ENCODE measurements at regions of chr22 and their contacts with region 1.

Region 1: DNA sequence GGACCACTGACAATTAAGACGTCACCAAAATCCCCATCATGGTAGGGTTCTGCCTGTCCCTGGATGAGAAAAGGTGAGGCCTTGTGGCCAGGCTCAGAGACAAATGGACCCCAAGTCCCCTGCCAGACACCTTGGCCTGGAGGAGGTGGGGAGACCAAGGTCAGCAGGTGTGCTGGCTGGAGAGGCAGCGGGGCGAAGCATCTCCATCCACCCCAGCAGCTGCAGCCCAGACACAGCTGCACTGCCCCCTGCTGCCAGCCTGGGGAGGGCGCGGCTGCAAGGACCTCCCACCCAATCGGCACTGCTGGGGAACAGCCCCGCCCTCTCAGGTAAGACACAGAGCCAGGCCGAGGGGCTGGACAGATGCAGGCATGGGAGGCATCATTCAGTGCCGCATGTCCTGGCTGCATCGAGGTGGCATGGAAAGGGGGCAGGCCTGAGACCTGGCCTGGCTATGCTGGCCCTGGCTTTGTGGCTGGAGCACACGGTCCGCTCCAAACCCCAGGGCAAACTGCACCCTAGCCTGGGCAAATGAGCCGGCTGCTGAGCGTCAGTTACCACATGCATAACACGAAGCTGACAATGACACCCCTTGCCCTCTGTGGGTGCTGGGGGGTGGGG is 12.2 kb upstream of the MFNG start:
- DNase-seq: peak; percentile 84
- ATAC-seq: peak; percentile 98
- H3K4me3 Mint-ChIP-seq: no peak overlapping the region
- H3K27ac Mint-ChIP-seq: no peak overlapping the region
- H3K4me1 Mint-ChIP-seq: peaks cover 15% of the 10 kb centered on the region
- H3K27me3 Mint-ChIP-seq: no peaks in the 10 kb centered on the region

Region 2: DNA sequence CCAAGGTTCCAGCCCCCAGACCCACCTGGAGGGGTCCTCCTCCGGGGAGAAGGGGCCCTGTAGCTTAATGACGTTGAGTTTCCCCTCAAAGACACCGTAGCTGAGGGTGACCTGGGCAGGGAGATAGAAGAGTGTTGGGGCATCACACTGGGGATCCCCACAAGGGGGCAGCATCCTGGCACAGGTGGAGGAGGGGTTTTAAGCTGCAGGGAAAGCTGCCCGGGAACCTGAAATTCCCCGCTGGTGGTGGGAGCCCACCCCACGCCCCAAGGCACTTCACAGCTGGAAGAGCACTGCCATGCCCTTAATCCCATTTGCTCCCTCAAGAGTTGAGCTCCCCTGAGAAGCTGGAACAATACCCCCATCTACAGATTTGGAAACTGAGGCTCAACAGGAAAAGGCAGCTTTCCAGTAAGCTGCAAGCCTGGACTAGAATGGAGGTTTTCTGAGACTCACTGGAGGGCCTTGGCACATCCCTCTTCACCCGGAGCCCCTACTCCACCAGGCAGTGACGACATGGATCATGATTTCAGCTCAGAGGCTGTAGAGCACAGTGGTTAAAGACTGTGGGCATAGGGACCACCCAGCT is 25.9 kb before region 1 on chr22:
- CTCF ChIA-PET with region 1: interaction called, 12 read pairs
- POLR2A ChIA-PET with region 1: no interaction called
- intact Hi-C with region 1: loop called (anchors 1 kb)
- DNase-seq: peak; percentile 67
- ATAC-seq: no peak
- H3K4me3 Mint-ChIP-seq: no peak overlapping the region
- H3K27ac Mint-ChIP-seq: no peak overlapping the region
- H3K4me1 Mint-ChIP-seq: no peaks in the 10 kb centered on the region
- H3K27me3 Mint-ChIP-seq: no peaks in the 10 kb centered on the region

Region 3: DNA sequence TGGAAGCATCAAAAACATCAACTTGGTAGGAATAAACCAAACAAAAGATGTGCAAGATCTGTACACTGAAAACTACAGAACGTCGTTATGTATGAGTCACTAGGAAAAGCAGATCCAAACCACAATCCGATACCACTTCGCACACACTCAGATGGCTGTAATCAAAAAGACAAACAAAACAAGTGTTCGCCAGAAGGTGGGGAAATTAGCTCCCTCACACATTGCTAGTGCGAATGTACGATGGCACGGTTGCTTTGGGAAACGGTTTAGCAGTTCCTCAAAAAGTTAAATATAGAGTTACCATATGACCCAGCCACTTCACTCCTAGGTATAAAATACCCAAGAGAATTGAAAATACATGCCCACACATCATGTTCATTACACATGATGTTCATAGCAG is 35.6 kb after region 1 on chr22:
- CTCF ChIA-PET with region 1: no interaction called
- POLR2A ChIA-PET with region 1: no interaction called
- intact Hi-C with region 1: no loop called
- DNase-seq: peak; percentile 42
- ATAC-seq: peak; percentile 37
- H3K4me3 Mint-ChIP-seq: no peak overlapping the region
- H3K27ac Mint-ChIP-seq: no peak overlapping the region
- H3K4me1 Mint-ChIP-seq: peaks cover 29% of the 10 kb centered on the region
- H3K27me3 Mint-ChIP-seq: peaks cover 5% of the 10 kb centered on the region